Right ventricle myocardium inferior (tissue), 1 donor: ENCODE measurements at regions of chr5 and their contacts with region 1.

Region 1: GRCh38 chr5:140157032-140157803 is 17.8 kb upstream of the CYSTM1 start:
- DNase-seq: peak; percentile 96
- ATAC-seq: peak; percentile 96

Region 2: DNA sequence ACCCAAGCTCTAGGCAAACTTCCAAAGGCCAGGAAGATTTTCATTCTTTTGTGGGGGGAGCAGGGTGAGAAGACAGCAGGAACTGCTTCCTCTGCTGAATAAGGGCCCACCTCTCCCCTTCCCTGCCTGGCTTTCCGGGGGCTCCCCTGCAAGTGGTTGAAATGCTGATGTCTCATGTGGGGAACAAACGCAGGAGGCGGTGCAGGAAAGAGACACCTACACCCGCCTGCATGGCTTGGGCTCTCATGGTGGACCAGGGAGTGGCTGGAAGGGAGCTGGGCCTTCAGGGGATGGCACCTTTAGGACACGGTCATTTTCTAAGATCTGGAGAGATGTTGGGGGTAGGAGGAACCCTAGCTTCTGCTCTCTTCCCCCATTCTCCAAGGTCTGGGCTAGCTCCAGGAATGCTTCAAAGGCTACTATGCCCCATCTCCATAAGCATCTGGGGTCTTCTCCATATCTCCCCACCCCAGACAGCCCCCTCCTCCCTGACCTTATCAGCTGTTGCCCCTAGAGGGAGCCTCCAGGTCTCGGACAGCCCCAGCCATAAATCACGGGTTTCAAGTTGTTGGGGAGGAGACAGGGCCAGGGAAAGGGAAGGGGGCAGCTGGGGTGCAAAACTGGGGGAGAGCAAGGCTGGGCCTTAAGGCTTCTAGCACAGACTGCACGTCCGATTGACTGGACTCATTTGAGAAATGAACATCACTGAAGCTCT is 285.0 kb before region 1 on chr5:
- intact Hi-C with region 1: loop called (anchors 10 kb)
- DNase-seq: no peak
- ATAC-seq: peak; percentile 7

Region 3: DNA sequence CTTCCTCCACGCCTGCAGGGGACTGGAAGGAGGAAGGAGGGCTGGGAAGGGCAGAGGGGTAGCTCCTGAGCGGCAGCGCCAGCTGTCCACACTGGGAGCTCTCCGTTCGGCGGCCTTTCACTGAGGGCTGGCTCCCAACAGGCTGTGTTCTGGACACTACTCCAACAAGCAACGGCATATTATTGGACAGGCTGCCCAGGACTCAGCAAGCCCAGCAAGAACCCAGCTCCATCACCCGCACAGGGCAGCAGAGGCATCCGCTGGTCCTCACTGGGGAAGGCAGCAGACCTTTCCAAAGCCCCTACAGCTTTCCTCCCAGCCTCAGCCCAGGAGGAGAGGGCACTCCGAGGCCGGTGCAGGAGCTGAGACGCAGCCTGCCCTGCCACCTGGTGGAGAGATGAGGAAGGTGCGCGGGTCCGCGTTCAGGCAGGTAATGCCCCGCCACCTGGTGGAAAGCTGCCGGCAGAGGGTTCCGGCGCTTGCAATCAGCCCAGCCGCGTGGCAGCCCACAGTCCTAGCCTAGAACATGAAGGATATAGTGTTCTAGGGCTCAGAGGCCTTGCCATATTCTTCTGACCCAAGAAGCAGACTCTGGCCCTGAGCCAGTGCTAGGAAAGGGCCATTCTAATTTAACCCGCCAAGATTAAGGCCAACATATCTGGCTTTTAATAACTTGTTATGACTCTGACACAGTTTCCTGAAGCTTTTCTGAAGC is 188.5 kb before region 1 on chr5:
- intact Hi-C with region 1: loop called (anchors 2 kb)
- DNase-seq: peak; percentile 87
- ATAC-seq: peak; percentile 92

Region 4: GRCh38 chr5:140058212-140058932 is 98.8 kb before region 1 on chr5:
- intact Hi-C with region 1: no loop called
- DNase-seq: no peak
- ATAC-seq: no peak

Region 5: DNA sequence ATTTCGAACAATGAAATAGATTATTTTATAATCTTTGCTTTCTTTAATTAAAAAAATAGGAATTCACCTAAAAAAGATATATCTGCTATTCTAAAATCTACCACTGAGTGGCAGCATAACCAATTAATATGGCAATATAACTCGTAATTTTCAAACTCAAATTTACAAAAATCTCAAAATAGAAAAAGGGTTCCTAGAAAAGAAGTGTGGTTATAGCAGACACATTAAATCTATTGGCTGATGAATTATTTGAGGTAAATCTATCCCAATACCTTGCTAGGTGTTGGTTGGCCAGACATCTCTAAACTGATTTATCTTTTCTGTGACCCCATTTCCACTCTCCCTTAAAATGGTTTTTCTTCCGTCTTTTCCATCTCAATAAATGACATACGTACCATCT is 83.9 kb before region 1 on chr5:
- intact Hi-C with region 1: loop called (anchors 1 kb)
- DNase-seq: no peak
- ATAC-seq: no peak